ENCODE measurements at regions of chr4 and their contacts with region 1.

Region 1: GRCh38 chr4:73103799-73104503 is 34.4 kb upstream of the COX18 start:
- DNase-seq: no peak
- H3K4me3 Mint-ChIP-seq: no peak overlapping the region
- H3K27ac Mint-ChIP-seq: peak overlapping the region; percentile 65
- H3K4me1 Mint-ChIP-seq: peaks cover 20% of the 10 kb centered on the region
- H3K27me3 Mint-ChIP-seq: no peaks in the 10 kb centered on the region

Region 2: DNA sequence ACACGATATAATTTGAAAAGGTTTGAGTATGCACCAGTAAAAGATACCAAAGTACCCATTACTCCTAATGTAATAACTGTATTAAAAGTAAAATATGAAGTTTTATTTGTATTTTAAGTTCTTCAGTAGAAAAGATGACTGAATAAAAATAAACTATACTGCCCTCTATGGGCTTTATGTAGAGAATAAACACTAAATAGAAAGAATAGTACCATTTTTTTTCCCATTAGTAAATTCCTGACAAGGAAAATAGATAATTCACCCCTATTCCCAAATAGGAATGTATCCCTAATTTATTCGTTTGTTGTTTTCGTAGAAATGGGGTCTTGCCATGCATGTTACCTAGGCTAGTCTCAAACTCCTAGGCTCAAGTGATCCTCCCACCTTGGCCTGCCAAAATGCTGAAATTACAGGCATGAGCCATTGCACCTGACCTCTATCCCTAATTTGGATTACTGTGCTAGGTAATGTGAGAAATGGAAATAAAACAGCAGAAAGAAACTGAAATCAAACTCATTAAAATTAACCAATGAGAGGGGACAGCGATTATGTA is 39.1 kb after region 1 on chr4:
- intact Hi-C with region 1: loop called (anchors 5 kb)
- DNase-seq: no peak
- H3K4me3 Mint-ChIP-seq: no peak overlapping the region
- H3K27ac Mint-ChIP-seq: no peak overlapping the region
- H3K4me1 Mint-ChIP-seq: peaks cover 14% of the 10 kb centered on the region
- H3K27me3 Mint-ChIP-seq: no peaks in the 10 kb centered on the region

Measured in activated T-helper 1 cell treated with anti-CD3 and anti-CD28 coated beads, Interleukin-12 subunit alpha, Interleukin-12 subunit beta, Interleukin-2, Interleukin-4 antibody, amounts not matched to agents 30 ng/mL and 10 ng/mL and 1 ng/mL, durations not matched to agents 14 hours and 24 hours and 36 hours (primary cell).